Astrocyte of the cerebellum (primary cell): ENCODE measurements at regions of chr14 and their contacts with region 1.

Region 1: DNA sequence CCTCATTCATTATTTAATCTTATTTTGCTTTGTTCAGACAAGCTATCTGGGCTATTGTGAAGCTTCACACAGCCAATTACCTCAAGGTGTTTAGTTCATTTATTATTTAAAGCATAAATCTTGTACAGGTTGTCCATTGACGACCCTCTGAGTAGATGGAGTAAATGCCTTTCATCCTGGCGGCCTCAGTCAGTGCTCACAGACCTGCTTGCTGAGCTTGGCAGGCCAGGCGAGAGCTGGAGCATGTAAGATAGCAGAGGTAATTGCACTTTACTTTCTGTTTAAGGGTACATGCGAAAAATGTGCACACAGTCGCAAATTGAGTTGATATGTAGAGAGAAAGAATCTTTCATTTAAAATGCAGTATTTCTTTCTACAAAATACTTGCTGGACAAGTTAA is 224.4 kb downstream of the NPAS3 start:
- DNase-seq: no peak
- H3K4me3 ChIP-seq: no peak overlapping the region
- CTCF ChIP-seq: no peak

Region 2: DNA sequence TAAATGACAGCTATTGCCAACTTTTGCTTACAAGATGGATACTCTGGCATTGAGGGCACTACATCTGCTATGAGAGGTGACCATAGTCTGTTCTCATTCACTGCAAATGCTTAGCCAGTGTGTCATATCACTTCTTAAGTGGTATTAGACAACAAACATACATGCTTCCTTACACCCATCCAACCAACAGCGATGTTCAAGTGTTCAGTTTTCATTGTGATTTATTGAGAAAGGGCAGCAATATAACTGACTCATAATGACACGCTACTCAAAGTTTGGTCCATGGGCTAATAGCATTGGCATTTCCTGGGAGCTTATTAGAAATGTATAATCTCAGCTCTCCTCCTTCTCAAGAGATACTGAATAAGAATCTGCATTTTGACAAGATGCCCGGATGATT is 42.8 kb before region 1 on chr14:
- in situ Hi-C with region 1: loop called (anchors 5 kb)
- DNase-seq: no peak
- H3K4me3 ChIP-seq: no peak overlapping the region
- CTCF ChIP-seq: no peak